Heart left ventricle (tissue), 16 donors: ENCODE measurements at regions of chr1 and their contacts with region 1.

Region 1: GRCh38 chr1:47624531-47624930 is 186.7 kb downstream of the FOXD2 start:
- DNase-seq: peak in 1 of 5 donors; percentile 12
- ATAC-seq: no peak
- H3K4me3 ChIP-seq: no peak overlapping the region
- H3K27ac ChIP-seq: no peak overlapping the region
- H3K4me1 ChIP-seq: peaks cover 0 to 12% (median 0%) of the 10 kb centered on the region in 12 donors
- H3K27me3 ChIP-seq: peaks cover 0 to 20% (median 0%) of the 10 kb centered on the region in 9 donors
- CTCF ChIP-seq: peak in 6 of 12 donors; percentile 12 to 44 (median 29)
- POLR2A ChIP-seq: no peak

Region 2: GRCh38 chr1:47280157-47280556 is 344.4 kb before region 1 on chr1:
- intact Hi-C with region 1: no loop called
- DNase-seq: no peak
- ATAC-seq: no peak
- H3K4me3 ChIP-seq: no peak overlapping the region
- H3K27ac ChIP-seq: no peak overlapping the region
- H3K4me1 ChIP-seq: no peaks in the 10 kb centered on the region
- H3K27me3 ChIP-seq: no peaks in the 10 kb centered on the region
- CTCF ChIP-seq: no peak
- POLR2A ChIP-seq: no peak

Region 3: GRCh38 chr1:47437447-47438164 is 186.9 kb before region 1 on chr1 and contains the start of gene FOXD2:
- intact Hi-C with region 1: loop called in 1 of 10 experiments (anchors 5 kb)
- DNase-seq: peak; percentile 83 to 93 (median 85)
- ATAC-seq: peak; percentile 92 to 95 (median 95)
- H3K4me3 ChIP-seq: peak within 1 kb of the TSS; percentile 36 to 81 (median 70)
- H3K27ac ChIP-seq: peak within 1 kb of the TSS in 11 of 12 donors; percentile 49 to 90 (median 69)
- H3K4me1 ChIP-seq: peaks cover 4 to 56% (median 25%) of the 10 kb centered on the region in 12 donors
- H3K27me3 ChIP-seq: peaks cover 43 to 98% (median 84%) of the 10 kb centered on the region in 9 donors
- CTCF ChIP-seq: peak; percentile 92 to 100 (median 98)
- POLR2A ChIP-seq: peak in 1 of 2 donors; percentile 62
- total RNA-seq, gene FOXD2: 0.05 to 0.14 (median 0.12) TPM in 5 of 9 donors, not detected in the others

Region 4: DNA sequence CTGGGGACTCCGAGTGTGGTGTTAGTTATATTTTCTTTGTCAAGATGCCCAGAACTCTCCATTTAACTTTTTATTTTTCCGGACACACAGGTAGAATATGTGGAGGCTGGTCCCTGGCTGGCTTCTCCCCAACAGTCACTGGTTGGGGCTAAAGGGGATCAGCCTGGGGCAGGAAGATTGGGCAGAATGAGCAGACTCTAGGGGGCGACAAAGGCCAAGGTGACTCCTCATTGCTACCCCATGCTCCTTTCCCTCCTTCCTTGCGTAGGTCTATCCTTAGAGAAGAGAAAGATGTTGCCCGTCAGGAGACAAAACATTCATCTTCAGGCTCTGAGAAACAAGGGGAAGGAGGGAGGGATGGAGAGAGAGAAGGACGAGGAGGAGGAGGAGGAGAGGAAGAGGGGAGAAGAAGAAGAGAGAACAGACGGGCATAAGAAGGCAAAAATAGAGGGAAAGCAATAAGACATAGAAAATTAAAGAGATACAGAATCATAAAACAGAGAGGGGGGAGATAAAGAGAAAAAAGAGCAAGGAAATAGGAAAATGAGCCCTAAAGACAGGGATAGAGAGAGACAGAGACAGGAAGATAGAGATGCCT is 96.8 kb before region 1 on chr1:
- intact Hi-C with region 1: loop called in 2 of 10 experiments (anchors 2 to 10 kb)
- DNase-seq: no peak
- ATAC-seq: no peak
- H3K4me3 ChIP-seq: no peak overlapping the region
- H3K27ac ChIP-seq: no peak overlapping the region
- H3K4me1 ChIP-seq: peaks cover 0 to 6% (median 0%) of the 10 kb centered on the region in 12 donors
- H3K27me3 ChIP-seq: peaks cover 0 to 14% (median 4%) of the 10 kb centered on the region in 9 donors
- CTCF ChIP-seq: peak in 11 of 12 donors; percentile 23 to 54 (median 41)
- POLR2A ChIP-seq: no peak

Region 5: DNA sequence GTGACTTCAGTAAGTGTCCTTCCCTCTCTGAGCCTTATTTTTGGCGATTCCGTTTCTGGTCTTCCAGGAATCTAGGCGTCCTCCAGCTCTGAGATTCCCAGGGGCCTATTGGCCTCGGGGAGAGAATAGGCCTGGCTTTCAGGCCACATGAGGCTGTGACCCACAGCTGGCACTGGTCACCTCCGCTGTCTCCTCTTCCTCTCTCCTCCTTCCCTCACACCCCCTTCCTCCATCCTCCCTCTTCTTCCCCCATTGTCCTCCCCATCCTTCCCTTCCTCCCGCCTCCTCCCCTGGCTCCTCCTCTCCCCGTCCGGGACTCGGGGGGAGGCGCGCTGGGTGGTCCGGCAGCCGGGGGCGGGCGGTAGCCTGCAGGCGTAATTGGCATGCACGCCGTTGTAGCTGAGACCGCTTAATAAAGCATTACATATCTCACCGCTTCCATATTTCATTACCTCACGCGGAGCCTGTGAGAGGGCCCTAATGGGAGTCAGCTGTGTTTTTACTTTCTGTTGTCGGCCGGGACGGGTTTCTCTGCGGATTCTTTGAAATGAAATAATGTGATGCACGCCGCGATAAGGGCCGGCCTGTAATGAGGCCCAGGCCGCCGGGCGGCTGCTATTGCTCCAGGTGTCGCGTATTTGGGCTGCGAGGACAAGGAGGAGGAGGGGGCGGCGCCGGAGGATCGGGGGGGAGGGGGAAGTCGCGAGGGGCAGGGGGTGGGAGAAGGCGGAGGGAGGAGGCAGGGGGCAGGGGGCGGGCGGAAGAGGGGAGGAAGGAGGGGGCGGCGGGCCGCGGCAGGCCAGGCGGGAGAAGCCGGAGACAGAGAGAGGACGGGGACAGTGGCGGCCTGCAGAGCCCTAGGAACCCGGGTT is 91.4 kb before region 1 on chr1:
- intact Hi-C with region 1: loop called in 1 of 10 experiments (anchors 10 kb)
- DNase-seq: peak; percentile 66 to 79 (median 73)
- ATAC-seq: peak; percentile 55 to 90 (median 82)
- H3K4me3 ChIP-seq: peak overlapping the region in 11 of 12 donors; percentile 12 to 63 (median 51)
- H3K27ac ChIP-seq: peak overlapping the region in 7 of 12 donors; percentile 26 to 58 (median 41)
- H3K4me1 ChIP-seq: peaks cover 0 to 32% (median 11%) of the 10 kb centered on the region in 12 donors
- H3K27me3 ChIP-seq: peaks cover 0 to 16% (median 0%) of the 10 kb centered on the region in 9 donors
- CTCF ChIP-seq: no peak
- POLR2A ChIP-seq: no peak

Region 6: GRCh38 chr1:47587891-47588582 is 36.5 kb before region 1 on chr1:
- intact Hi-C with region 1: loop called in 1 of 10 experiments (anchors 2 kb)
- DNase-seq: peak in 4 of 5 donors; percentile 52 to 69 (median 60)
- ATAC-seq: peak; percentile 73 to 90 (median 78)
- H3K4me3 ChIP-seq: no peak overlapping the region
- H3K27ac ChIP-seq: peak overlapping the region in 7 of 12 donors; percentile 5 to 62 (median 47)
- H3K4me1 ChIP-seq: peaks cover 3 to 47% (median 20%) of the 10 kb centered on the region in 12 donors
- H3K27me3 ChIP-seq: peaks cover 0 to 22% (median 5%) of the 10 kb centered on the region in 9 donors
- CTCF ChIP-seq: no peak
- POLR2A ChIP-seq: no peak

Region 7: DNA sequence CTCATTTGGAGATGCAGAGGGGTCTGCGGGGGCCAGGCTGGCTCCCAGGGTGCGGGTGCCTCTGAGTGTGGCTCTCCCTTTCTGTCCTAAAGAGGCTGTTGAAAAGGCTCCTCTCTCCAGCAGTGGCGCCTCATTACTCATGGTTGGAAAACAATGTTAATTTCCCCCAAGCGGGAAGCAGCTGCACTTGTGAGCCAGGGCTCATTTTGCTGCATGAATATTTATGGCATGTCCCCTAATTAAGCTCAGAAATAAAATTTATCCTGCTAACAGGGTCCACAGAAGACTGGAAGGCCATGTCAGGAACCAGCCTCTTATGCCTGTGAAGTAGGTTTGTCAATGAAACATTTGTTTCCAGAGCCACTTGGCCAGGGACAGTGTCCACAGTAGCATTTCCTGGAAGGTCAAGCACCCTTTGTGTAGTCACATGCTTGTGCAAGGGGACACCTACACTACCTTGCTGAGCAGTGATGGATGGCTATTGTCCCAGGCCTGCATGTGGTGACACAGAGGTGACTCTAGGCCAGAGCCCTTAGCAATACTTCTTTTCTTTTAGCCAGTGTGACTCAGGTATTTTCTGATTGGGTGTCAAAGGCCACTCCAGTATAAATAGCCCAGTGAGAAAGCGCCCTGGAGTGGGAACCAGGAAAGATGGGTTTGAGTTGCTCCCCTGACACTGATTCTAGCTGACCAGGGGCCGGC is 72.4 kb after region 1 on chr1:
- intact Hi-C with region 1: no loop called
- DNase-seq: no peak
- ATAC-seq: no peak
- H3K4me3 ChIP-seq: no peak overlapping the region
- H3K27ac ChIP-seq: no peak overlapping the region
- H3K4me1 ChIP-seq: no peaks in the 10 kb centered on the region
- H3K27me3 ChIP-seq: peaks cover 0 to 13% (median 0%) of the 10 kb centered on the region in 9 donors
- CTCF ChIP-seq: no peak
- POLR2A ChIP-seq: no peak